Caco-2 (cell line): ENCODE measurements at regions of chr3 and their contacts with region 1.

Region 1: DNA sequence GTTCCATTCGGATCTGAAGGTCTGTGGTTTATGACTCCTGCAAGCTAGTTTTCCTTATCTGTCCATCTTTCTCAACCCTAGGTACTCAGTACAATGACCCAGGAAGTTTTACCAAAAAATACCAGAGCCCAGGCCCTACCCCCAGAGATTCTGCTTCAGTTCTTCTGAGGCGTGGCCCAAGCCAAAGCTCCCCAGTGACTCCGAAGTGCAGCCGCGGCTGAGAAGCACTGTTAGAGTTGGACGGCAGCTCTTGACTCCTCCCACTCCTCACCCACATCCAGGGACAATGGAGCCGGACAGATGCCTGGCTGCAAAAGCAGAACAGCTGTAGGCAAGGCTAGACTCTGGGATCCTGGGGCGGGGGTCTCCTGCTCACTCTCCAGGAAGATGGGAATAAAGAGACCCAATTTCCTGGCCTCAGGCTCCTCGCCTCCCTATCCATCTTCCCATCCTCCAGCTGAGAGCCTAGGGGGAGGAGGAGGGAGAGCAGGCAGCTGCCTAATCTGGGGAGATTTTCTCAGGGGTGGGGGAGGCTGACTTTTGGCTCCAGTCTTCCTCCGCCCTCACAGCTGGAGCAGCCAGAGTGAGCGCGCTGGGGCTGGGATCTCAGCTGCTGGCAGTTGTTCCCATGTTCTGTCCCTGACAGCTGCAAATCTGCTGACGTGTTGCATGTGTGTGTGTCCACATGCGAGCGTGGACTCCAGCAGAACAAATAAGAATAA is 223.7 kb downstream of the OPA1 start:
- DNase-seq: peak; percentile 83 to 88
- H3K4me3 ChIP-seq: peak overlapping the region; percentile 9
- H3K4me3 Mint-ChIP-seq: peak overlapping the region; percentile 46
- H3K27ac Mint-ChIP-seq: peak overlapping the region; percentile 45
- H3K4me1 ChIP-seq: peaks cover 54% of the 10 kb centered on the region
- H3K4me1 Mint-ChIP-seq: peaks cover 43% of the 10 kb centered on the region
- H3K27me3 ChIP-seq: no peaks in the 10 kb centered on the region
- H3K27me3 Mint-ChIP-seq: no peaks in the 10 kb centered on the region
- CTCF ChIP-seq: no peak

Region 2: GRCh38 chr3:193794002-193794881 is 22.5 kb before region 1 on chr3:
- CTCF ChIA-PET with region 1: interaction called, 4 read pairs
- POLR2A ChIA-PET with region 1: no interaction called
- intact Hi-C with region 1: loop called (anchors 1 kb)
- DNase-seq: peak; percentile 58 to 65
- H3K4me3 ChIP-seq: no peak overlapping the region
- H3K4me3 Mint-ChIP-seq: peak overlapping the region; percentile 11
- H3K27ac Mint-ChIP-seq: peak overlapping the region; percentile 64
- H3K4me1 ChIP-seq: peaks cover 43% of the 10 kb centered on the region
- H3K4me1 Mint-ChIP-seq: peaks cover 47% of the 10 kb centered on the region
- H3K27me3 ChIP-seq: no peaks in the 10 kb centered on the region
- H3K27me3 Mint-ChIP-seq: no peaks in the 10 kb centered on the region
- CTCF ChIP-seq: no peak

Region 3: GRCh38 chr3:193842029-193842798 is 25.5 kb after region 1 on chr3:
- CTCF ChIA-PET with region 1: interaction called, 5 read pairs
- POLR2A ChIA-PET with region 1: interaction called, 17 read pairs
- intact Hi-C with region 1: loop called (anchors 1 kb)
- DNase-seq: peak in 1 of 2 experiments; percentile 48
- H3K4me3 ChIP-seq: peak overlapping the region; percentile 37
- H3K4me3 Mint-ChIP-seq: peak overlapping the region; percentile 73
- H3K27ac Mint-ChIP-seq: peak overlapping the region; percentile 92
- H3K4me1 ChIP-seq: peaks cover 77% of the 10 kb centered on the region
- H3K4me1 Mint-ChIP-seq: peaks cover 50% of the 10 kb centered on the region
- H3K27me3 ChIP-seq: no peaks in the 10 kb centered on the region
- H3K27me3 Mint-ChIP-seq: no peaks in the 10 kb centered on the region
- CTCF ChIP-seq: no peak

Region 4: DNA sequence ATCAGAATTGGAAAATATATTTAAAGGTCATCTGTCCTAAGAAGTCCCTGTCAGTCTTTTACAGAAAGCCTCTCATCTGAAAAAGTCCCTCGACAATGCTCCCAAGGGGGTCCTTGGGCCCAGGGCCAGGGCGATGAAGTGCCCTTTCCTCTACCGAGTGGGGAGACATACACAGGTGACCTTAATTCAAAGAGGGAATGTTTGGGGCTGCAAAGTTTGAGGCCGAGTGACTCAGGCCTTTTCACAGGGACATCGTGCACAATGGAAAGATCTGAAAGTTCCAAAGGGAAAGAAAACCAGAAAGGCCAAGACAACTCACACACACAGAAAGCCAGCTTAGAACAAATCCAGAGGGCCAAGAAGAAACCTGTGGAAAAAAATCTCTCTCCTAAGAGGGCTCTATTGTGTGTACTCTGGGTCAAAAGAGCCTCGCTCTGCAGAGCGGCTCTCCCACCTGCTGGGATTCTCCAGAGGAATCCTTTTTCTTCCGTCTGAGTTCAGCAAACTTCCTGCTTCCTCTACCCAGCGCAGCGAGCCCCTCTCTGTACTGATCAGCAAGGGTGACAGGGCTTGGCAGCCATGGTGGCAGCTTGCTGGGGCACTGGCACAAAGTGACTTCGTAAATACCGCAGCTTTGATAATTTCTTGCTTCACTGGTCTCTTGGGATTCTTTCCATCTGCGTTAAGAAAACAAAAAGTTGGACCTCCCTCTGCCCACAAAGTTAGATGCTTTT is 35.4 kb after region 1 on chr3:
- CTCF ChIA-PET with region 1: interaction called, 3 read pairs
- POLR2A ChIA-PET with region 1: interaction called, 4 read pairs
- intact Hi-C with region 1: loop called (anchors 1 kb)
- DNase-seq: no peak
- H3K4me3 ChIP-seq: no peak overlapping the region
- H3K4me3 Mint-ChIP-seq: peak overlapping the region; percentile 20
- H3K27ac Mint-ChIP-seq: peak overlapping the region; percentile 84
- H3K4me1 ChIP-seq: peaks cover 56% of the 10 kb centered on the region
- H3K4me1 Mint-ChIP-seq: peaks cover 40% of the 10 kb centered on the region
- H3K27me3 ChIP-seq: no peaks in the 10 kb centered on the region
- H3K27me3 Mint-ChIP-seq: no peaks in the 10 kb centered on the region
- CTCF ChIP-seq: no peak

Region 5: DNA sequence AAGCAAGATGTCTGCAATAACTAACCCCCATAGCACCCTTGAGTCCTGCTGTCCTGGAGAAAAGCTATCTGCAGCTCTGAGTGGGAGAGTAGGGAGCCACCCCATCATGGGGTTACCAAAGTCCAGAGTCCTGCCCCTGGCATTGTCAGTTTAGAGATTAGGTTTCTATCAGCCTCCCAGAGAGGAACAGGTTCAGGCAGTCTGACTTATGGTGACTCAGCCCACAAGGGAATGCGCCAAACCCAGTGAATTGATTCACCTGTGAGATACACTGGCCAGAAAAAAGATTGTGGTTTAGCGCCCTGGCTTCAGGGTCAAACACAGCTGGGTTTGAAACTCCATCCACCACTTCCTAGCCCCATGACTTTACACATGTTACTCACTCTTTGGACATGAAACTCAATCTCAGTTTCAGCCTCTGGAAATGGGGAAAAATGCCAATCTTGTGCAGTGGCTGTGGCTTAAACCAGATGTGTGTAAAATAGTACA is 55.6 kb after region 1 on chr3:
- CTCF ChIA-PET with region 1: interaction called, 3 read pairs
- POLR2A ChIA-PET with region 1: no interaction called
- intact Hi-C with region 1: loop called (anchors 1 kb)
- DNase-seq: peak; percentile 91 to 94
- H3K4me3 ChIP-seq: no peak overlapping the region
- H3K4me3 Mint-ChIP-seq: peak overlapping the region; percentile 50
- H3K27ac Mint-ChIP-seq: peak overlapping the region; percentile 88
- H3K4me1 ChIP-seq: peaks cover 83% of the 10 kb centered on the region
- H3K4me1 Mint-ChIP-seq: peaks cover 74% of the 10 kb centered on the region
- H3K27me3 ChIP-seq: no peaks in the 10 kb centered on the region
- H3K27me3 Mint-ChIP-seq: no peaks in the 10 kb centered on the region
- CTCF ChIP-seq: no peak